Heart right ventricle (tissue), 16 donors: ENCODE measurements at regions of chr19 and their contacts with region 1.

Region 1: GRCh38 chr19:1513499-1514294 is 878 bp upstream of the ADAMTSL5 start:
- DNase-seq: peak in 1 of 2 donors; percentile 60
- ATAC-seq: peak; percentile 34 to 63 (median 49)
- H3K4me3 ChIP-seq: peak overlapping the region; percentile 43 to 74 (median 63)
- H3K27ac ChIP-seq: peak overlapping the region; percentile 77 to 97 (median 90)
- H3K4me1 ChIP-seq: peaks cover 7 to 49% (median 17%) of the 10 kb centered on the region in 9 donors
- H3K27me3 ChIP-seq: peaks cover 0 to 58% (median 17%) of the 10 kb centered on the region in 7 donors
- CTCF ChIP-seq: peak; percentile 37 to 69 (median 63)

Region 2: DNA sequence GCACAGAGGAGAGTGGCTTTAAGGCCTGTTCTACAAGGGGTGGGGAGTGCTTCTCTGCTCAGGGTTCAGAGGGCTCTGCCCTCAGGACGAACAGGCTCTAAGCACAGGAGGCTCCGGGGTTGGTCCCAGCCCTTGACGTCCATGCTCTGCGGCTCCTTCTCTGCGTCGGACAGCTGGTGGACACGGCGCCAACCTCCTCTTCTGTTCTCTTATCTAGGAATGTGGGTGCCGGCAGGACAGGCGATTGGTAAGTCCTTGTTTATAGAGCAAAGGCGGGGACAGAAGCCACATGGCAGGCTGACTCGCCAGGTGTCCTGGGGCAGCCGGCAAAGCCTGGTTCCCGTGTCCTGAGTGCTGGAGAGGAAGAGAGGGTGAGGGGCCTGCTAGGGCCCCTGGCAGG is 83.9 kb before region 1 on chr19:
- intact Hi-C with region 1: no loop called
- DNase-seq: peak; percentile 63
- ATAC-seq: peak; percentile 63 to 90 (median 78)
- H3K4me3 ChIP-seq: no peak overlapping the region
- H3K27ac ChIP-seq: peak overlapping the region in 6 of 10 donors; percentile 2 to 77 (median 58)
- H3K4me1 ChIP-seq: peaks cover 0 to 34% (median 16%) of the 10 kb centered on the region in 9 donors
- H3K27me3 ChIP-seq: no peaks in the 10 kb centered on the region
- CTCF ChIP-seq: no peak

Region 3: DNA sequence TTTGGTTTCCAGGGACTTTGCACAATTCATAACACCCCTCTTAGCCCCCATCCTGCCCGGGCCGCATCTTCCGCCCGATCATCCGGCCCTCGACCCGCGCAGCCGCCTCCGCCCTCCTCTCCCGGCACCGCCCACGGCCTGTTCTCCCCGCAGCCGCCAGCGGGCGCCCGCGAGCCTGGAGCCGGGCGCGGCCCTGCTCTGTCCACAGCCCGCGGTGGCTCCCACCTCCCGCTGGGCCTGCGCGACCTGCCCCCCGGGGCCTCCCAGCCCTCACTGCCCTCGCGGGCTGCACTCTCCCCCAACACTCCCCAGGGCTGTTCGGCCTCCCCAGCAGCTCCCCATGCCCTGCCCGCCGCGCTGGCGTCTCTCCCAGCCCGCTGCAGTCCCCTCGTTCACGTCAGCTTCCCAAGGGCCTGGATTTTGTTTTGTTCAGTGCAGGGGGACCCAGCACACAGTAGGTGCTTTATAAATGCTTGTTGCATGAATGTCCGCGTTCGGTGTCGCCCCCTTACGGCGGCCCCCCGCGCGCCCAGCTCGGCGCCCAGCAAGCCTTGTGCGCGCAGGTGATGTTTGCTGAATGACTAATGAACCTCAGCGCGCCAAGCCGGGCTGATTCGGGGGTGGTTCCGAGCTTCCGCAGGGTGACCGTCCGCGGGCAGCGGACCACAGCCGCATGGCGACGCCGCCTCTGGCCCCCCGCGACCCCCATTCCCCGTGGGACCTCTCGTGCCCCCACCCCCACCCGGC is 68.3 kb before region 1 on chr19:
- intact Hi-C with region 1: loop called in 2 of 10 experiments (anchors 10 kb)
- DNase-seq: peak; percentile 46 to 75
- ATAC-seq: peak; percentile 87 to 92 (median 88)
- H3K4me3 ChIP-seq: peak overlapping the region in 9 of 10 donors; percentile 18 to 57 (median 47)
- H3K27ac ChIP-seq: peak overlapping the region in 1 of 10 donors; percentile 54
- H3K4me1 ChIP-seq: peaks cover 11 to 34% (median 29%) of the 10 kb centered on the region in 9 donors
- H3K27me3 ChIP-seq: peaks cover 28 to 56% (median 50%) of the 10 kb centered on the region in 7 donors
- CTCF ChIP-seq: peak; percentile 86 to 98 (median 93)

Region 4: DNA sequence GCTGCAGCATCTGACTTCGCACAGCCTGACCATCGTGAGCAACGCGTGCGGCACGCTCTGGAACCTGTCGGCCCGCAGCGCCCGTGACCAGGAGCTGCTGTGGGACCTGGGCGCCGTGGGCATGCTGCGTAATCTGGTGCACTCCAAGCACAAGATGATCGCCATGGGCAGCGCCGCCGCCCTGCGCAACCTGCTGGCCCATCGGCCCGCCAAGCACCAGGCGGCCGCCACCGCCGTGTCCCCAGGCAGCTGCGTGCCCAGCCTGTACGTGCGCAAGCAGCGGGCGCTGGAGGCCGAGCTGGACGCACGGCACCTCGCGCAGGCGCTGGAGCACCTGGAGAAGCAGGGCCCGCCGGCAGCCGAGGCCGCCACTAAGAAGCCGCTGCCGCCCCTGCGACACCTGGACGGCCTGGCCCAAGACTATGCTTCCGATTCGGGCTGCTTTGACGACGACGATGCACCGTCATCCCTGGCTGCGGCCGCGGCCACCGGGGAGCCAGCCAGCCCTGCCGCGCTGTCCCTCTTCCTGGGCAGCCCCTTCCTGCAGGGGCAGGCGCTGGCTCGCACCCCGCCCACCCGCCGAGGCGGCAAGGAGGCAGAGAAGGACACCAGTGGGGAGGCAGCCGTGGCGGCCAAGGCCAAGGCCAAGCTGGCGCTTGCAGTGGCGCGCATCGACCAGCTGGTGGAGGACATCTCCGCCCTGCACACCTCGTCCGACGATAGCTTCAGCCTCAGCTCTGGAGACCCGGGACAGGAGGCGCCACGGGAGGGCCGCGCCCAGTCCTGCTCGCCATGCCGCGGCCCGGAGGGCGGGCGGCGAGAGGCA is 48.3 kb before region 1 on chr19:
- intact Hi-C with region 1: loop called in 2 of 10 experiments (anchors 10 kb)
- DNase-seq: peak in 1 of 2 donors; percentile 56
- ATAC-seq: peak; percentile 12 to 66 (median 42)
- H3K4me3 ChIP-seq: peak overlapping the region in 3 of 10 donors; percentile 11 to 35 (median 17)
- H3K27ac ChIP-seq: no peak overlapping the region
- H3K4me1 ChIP-seq: peaks cover 27 to 49% (median 45%) of the 10 kb centered on the region in 9 donors
- H3K27me3 ChIP-seq: peaks cover 30 to 63% (median 46%) of the 10 kb centered on the region in 7 donors
- CTCF ChIP-seq: peak; percentile 17 to 62 (median 57)

Region 5: GRCh38 chr19:1747285-1748114 is 233.8 kb after region 1 on chr19:
- intact Hi-C with region 1: no loop called
- DNase-seq: no peak
- ATAC-seq: no peak
- H3K4me3 ChIP-seq: no peak overlapping the region
- H3K27ac ChIP-seq: no peak overlapping the region
- H3K4me1 ChIP-seq: peaks cover 10 to 25% (median 19%) of the 10 kb centered on the region in 9 donors
- H3K27me3 ChIP-seq: peaks cover 47 to 94% (median 93%) of the 10 kb centered on the region in 7 donors
- CTCF ChIP-seq: no peak